ENCODE measurements at regions of chr17 and their contacts with region 1.

Region 1: GRCh38 chr17:27635275-27635823 is 4.4 kb downstream of the LGALS9 start:
- DNase-seq: no peak
- ATAC-seq: no peak
- H3K4me3 Mint-ChIP-seq: no peak overlapping the region
- H3K27ac Mint-ChIP-seq: no peak overlapping the region
- H3K4me1 Mint-ChIP-seq: peaks cover 44% of the 10 kb centered on the region
- H3K27me3 Mint-ChIP-seq: no peaks in the 10 kb centered on the region

Region 2: DNA sequence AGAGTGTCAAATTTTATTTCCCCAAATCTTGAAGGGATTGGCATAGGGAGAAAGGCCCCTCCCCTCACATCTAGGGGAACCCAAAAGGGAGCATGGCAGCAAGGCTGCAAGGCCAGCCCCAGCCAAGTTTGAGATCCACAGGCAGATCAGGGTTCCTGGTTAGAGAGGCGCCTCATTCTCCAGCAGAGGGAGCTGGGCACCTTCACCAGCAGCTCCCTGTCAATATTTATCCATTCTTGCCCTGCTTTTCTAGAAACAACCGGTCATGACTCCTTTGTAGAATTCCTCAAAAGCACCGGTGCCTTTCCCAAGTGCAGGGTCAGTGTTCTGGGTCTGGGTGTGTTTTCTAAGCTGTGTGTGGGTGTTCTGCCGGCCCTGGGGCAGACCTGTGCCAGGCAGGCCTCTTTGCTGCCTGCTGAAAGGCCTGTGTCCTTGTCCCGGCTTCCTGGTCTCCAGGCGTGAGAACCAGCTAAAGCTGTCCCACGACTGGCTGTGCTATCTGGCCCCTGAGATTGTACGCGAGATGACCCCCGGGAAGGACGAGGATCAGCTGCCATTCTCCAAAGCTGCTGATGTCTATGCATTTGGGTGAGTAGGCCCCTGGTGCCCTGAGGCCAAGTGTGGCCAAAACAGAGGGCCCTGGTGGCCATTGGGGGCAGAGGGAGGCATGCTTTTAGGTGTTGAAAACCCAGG is 25.6 kb before region 1 on chr17:
- CTCF ChIA-PET with region 1: interaction called, 10 read pairs
- POLR2A ChIA-PET with region 1: interaction called, 3 read pairs
- DNase-seq: peak; percentile 53
- ATAC-seq: peak; percentile 67
- H3K4me3 Mint-ChIP-seq: no peak overlapping the region
- H3K27ac Mint-ChIP-seq: no peak overlapping the region
- H3K4me1 Mint-ChIP-seq: peaks cover 2% of the 10 kb centered on the region
- H3K27me3 Mint-ChIP-seq: no peaks in the 10 kb centered on the region